Endothelial cell of umbilical vein (primary cell): ENCODE measurements at regions of chr15 and their contacts with region 1.

Region 1: DNA sequence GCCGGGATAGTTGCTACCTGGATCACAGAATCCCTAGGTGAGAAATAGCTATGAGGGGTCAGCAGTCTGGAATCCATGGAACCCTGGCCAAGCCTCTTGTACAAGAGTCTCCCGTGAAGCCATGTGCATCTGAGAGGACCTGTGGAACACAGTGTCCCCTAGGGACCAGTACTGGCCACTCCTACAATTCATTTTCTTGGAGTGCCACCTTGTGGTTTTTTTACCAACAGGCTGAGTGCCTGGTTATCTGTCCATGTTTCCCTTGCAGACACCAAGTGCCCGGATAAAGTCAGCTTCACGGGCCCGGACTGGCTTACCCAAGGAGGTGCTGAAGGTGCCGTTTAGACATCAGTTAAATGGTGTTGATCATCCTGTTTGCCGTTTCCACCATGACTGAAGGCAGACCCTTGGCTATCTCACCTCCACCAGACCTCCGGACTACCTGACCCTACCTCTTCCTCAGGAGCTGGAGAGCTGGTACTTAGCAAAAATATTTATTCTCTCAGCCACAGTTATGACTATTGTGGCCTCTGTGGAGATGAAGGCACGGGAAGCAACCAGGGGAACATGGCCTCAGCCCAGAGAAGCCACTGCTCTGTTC is 93.9 kb downstream of the RBPMS2 start:
- DNase-seq: peak; percentile 70
- H3K4me3 ChIP-seq: no peak overlapping the region
- H3K27ac ChIP-seq: no peak overlapping the region
- H3K4me1 ChIP-seq: no peaks in the 10 kb centered on the region
- H3K27me3 ChIP-seq: no peaks in the 10 kb centered on the region
- CTCF ChIP-seq: peak; percentile 62 to 72
- POLR2A ChIP-seq: no peak

Region 2: GRCh38 chr15:64430000-64430735 is 251.4 kb before region 1 on chr15:
- CTCF ChIA-PET with region 1: interaction called, 53 read pairs
- POLR2A ChIA-PET with region 1: no interaction called
- dilution Hi-C with region 1: no loop called
- intact Hi-C with region 1: loop called (anchors 1 kb)
- DNase-seq: peak; percentile 77
- H3K4me3 ChIP-seq: no peak overlapping the region
- H3K27ac ChIP-seq: no peak overlapping the region
- H3K4me1 ChIP-seq: peaks cover 2% of the 10 kb centered on the region
- H3K27me3 ChIP-seq: no peaks in the 10 kb centered on the region
- CTCF ChIP-seq: no peak
- POLR2A ChIP-seq: no peak

Region 3: GRCh38 chr15:64571857-64572291 is 109.7 kb before region 1 on chr15:
- CTCF ChIA-PET with region 1: no interaction called
- POLR2A ChIA-PET with region 1: no interaction called
- dilution Hi-C with region 1: no loop called
- intact Hi-C with region 1: no loop called
- DNase-seq: peak; percentile 57
- H3K4me3 ChIP-seq: no peak overlapping the region
- H3K27ac ChIP-seq: no peak overlapping the region
- H3K4me1 ChIP-seq: no peaks in the 10 kb centered on the region
- H3K27me3 ChIP-seq: no peaks in the 10 kb centered on the region
- CTCF ChIP-seq: no peak
- POLR2A ChIP-seq: no peak

Region 4: GRCh38 chr15:64583519-64583918 is 98.0 kb before region 1 on chr15:
- CTCF ChIA-PET with region 1: no interaction called
- POLR2A ChIA-PET with region 1: no interaction called
- dilution Hi-C with region 1: no loop called
- intact Hi-C with region 1: no loop called
- DNase-seq: no peak
- H3K4me3 ChIP-seq: no peak overlapping the region
- H3K27ac ChIP-seq: no peak overlapping the region
- H3K4me1 ChIP-seq: peaks cover 14% of the 10 kb centered on the region
- H3K27me3 ChIP-seq: no peaks in the 10 kb centered on the region
- CTCF ChIP-seq: no peak
- POLR2A ChIP-seq: no peak

Region 5: GRCh38 chr15:64640146-64640871 is 41.2 kb before region 1 on chr15:
- CTCF ChIA-PET with region 1: no interaction called
- POLR2A ChIA-PET with region 1: no interaction called
- dilution Hi-C with region 1: no loop called
- intact Hi-C with region 1: no loop called
- DNase-seq: no peak
- H3K4me3 ChIP-seq: no peak overlapping the region
- H3K27ac ChIP-seq: no peak overlapping the region
- H3K4me1 ChIP-seq: peaks cover 2% of the 10 kb centered on the region
- H3K27me3 ChIP-seq: no peaks in the 10 kb centered on the region
- CTCF ChIP-seq: no peak
- POLR2A ChIP-seq: no peak

Region 6: DNA sequence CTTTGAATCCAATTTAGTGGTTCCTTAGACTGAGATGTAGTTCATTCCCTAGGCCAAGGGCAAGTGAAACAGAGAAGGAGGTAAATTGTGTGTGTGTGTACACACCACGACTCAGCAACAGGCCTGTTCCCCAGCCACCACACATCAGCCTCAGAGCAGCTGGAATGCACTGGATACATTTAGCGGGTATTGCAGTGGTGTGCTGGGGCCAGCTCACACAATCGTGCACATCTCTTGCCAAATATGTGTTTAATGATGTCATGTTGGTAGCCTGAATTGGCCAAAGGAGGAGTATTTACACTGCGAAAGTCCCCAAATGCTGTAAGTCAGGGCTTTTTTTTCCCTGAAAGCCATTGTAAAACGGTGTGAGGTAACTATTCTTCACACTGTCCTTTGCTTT is 11.6 kb after region 1 on chr15:
- CTCF ChIA-PET with region 1: interaction called, 12 read pairs
- POLR2A ChIA-PET with region 1: no interaction called
- dilution Hi-C with region 1: no loop called
- intact Hi-C with region 1: no loop called
- DNase-seq: no peak
- H3K4me3 ChIP-seq: no peak overlapping the region
- H3K27ac ChIP-seq: no peak overlapping the region
- H3K4me1 ChIP-seq: no peaks in the 10 kb centered on the region
- H3K27me3 ChIP-seq: no peaks in the 10 kb centered on the region
- CTCF ChIP-seq: no peak
- POLR2A ChIP-seq: no peak

Region 7: GRCh38 chr15:64717735-64718495 is 36.4 kb after region 1 on chr15:
- CTCF ChIA-PET with region 1: interaction called, 10 read pairs
- POLR2A ChIA-PET with region 1: no interaction called
- dilution Hi-C with region 1: no loop called
- intact Hi-C with region 1: no loop called
- DNase-seq: peak; percentile 65
- H3K4me3 ChIP-seq: no peak overlapping the region
- H3K27ac ChIP-seq: no peak overlapping the region
- H3K4me1 ChIP-seq: peaks cover 13% of the 10 kb centered on the region
- H3K27me3 ChIP-seq: no peaks in the 10 kb centered on the region
- CTCF ChIP-seq: no peak
- POLR2A ChIP-seq: no peak

Region 8: GRCh38 chr15:64911311-64912191 is 230.0 kb after region 1 on chr15 and contains the start of gene ANKDD1A:
- CTCF ChIA-PET with region 1: no interaction called
- POLR2A ChIA-PET with region 1: no interaction called
- dilution Hi-C with region 1: no loop called
- intact Hi-C with region 1: loop called (anchors 1 kb)
- DNase-seq: peak; percentile 56
- H3K4me3 ChIP-seq: peak within 1 kb of the TSS; percentile 15 to 54 (median 35)
- H3K27ac ChIP-seq: no peak within 1 kb of the TSS
- H3K4me1 ChIP-seq: peaks cover 4% of the 10 kb centered on the region
- H3K27me3 ChIP-seq: no peaks in the 10 kb centered on the region
- CTCF ChIP-seq: no peak
- POLR2A ChIP-seq: no peak
- total RNA-seq, gene ANKDD1A: 2.4 and 2.6 TPM in 2 replicates